ENCODE measurements at regions of chr2 and their contacts with region 1.

Region 1: GRCh38 chr2:170973492-170974303 is 44.6 kb downstream of the GORASP2 start:
- DNase-seq: peak; percentile 99
- H3K4me3 ChIP-seq: peak overlapping the region; percentile 69 to 72
- H3K27ac ChIP-seq: peak overlapping the region; percentile 47 to 91; a peak in 3 of 4 replicates
- H3K4me1 ChIP-seq: peaks cover 5 to 14% of the 10 kb centered on the region in 2 experiments; a peak in 2 of 4 replicates
- H3K27me3 ChIP-seq: no peaks in the 10 kb centered on the region
- CTCF ChIP-seq: peak; percentile 85
- EP300 ChIP-seq: 0 out of 4 replicates have a peak, but pooled peaks of 1 of the 2 experiments have one; percentile 7
- RAD21 ChIP-seq: peak; percentile 85

Region 2: DNA sequence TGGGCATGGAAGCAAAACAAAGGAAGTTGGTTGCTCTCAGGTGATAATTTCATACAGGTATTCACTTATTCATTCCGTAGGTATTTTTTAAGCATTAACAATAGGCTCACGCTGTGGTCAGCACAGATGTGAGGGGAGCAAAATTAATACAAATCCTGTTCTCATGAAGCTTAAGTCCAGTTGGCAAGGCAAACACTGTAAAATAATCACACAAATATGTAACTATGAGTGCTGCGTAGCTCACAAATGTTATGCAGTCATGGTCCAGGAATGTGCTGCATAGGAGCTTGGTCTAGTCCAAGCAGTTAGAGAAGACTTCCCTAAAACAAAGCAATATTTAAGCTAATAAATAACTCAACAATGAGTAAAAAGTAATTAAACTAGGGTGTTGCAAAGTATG is 234.7 kb before region 1 on chr2:
- CTCF ChIA-PET with region 1: no interaction called
- POLR2A ChIA-PET with region 1: no interaction called
- DNase-seq: no peak
- H3K4me3 ChIP-seq: no peak overlapping the region
- H3K27ac ChIP-seq: peak overlapping the region in 1 of 2 experiments; percentile 46; a peak in 2 of 4 replicates
- H3K4me1 ChIP-seq: no peaks in the 10 kb centered on the region
- H3K27me3 ChIP-seq: peaks cover 6% of the 10 kb centered on the region; the same call in 1 of the 2 replicates
- CTCF ChIP-seq: no peak
- EP300 ChIP-seq: no peak
- RAD21 ChIP-seq: no peak

Region 3: DNA sequence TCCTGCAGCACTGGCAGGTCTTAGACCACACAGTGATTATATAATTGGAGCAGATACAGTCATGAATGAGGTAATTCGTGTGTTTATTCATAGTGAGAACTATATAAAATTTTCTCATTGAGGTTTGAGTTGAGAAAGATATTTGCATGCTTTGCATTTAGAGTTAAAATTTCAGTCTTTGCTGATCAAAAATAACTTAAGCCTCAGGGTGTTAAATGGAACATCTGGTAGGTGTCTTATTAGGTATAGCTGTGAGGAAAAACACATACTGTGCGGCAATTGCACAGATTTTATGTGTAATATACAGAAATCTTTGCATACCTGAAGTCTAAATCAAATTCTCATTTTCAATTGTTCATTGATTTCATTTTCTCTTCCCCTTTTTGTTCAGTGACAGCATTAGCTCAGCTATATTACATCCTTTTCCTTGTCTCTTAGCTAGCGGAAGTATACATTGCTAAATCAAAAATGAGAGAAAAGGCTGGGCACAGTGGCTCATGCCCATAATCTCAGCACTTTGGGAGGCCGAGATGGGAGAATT is 23.4 kb before region 1 on chr2:
- CTCF ChIA-PET with region 1: interaction called, 15 read pairs
- POLR2A ChIA-PET with region 1: no interaction called
- DNase-seq: no peak
- H3K4me3 ChIP-seq: no peak overlapping the region
- H3K27ac ChIP-seq: no peak overlapping the region
- H3K4me1 ChIP-seq: no peaks in the 10 kb centered on the region
- H3K27me3 ChIP-seq: no peaks in the 10 kb centered on the region
- CTCF ChIP-seq: no peak
- EP300 ChIP-seq: no peak
- RAD21 ChIP-seq: no peak

Region 4: DNA sequence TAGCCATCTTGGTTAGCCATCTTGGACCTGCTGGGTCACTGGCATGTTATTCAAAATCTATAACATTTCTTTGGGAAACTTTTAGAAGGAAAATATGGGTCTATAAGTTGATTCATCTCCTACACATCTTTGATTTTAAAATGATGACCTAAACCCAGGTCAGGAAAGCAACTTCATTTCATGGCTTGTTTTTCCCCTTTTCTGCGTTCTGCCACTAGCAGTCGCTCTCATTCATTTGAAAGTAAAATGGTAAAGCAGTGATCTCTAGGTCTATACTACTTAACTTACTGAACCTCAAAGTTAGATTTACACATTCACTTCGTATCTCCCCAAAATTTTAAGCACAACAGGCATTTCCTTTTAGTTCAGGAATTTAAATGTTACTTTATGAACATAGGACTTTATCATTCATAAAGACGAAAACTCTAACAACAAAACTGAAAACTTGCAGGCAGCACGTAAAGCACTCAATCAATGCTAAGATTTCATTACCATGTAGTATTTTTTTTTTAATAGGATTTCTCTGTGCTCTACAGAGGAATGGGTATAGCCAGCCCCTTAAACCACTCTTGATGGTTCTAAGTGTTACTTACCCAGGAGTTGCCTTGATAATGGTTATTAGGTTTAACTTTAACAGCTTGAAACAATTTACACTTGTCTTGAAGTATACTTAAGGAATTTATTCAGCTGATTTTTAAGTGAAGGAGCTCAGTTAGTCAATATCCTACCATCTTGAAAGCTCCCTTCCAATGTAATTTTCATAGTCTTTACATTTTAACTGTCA is 17.9 kb after region 1 on chr2:
- CTCF ChIA-PET with region 1: interaction called, 10 read pairs
- POLR2A ChIA-PET with region 1: no interaction called
- DNase-seq: no peak
- H3K4me3 ChIP-seq: no peak overlapping the region
- H3K27ac ChIP-seq: no peak overlapping the region
- H3K4me1 ChIP-seq: no peaks in the 10 kb centered on the region
- H3K27me3 ChIP-seq: no peaks in the 10 kb centered on the region
- CTCF ChIP-seq: no peak
- EP300 ChIP-seq: no peak
- RAD21 ChIP-seq: no peak; the same call in 1 of the 2 replicates

Region 5: DNA sequence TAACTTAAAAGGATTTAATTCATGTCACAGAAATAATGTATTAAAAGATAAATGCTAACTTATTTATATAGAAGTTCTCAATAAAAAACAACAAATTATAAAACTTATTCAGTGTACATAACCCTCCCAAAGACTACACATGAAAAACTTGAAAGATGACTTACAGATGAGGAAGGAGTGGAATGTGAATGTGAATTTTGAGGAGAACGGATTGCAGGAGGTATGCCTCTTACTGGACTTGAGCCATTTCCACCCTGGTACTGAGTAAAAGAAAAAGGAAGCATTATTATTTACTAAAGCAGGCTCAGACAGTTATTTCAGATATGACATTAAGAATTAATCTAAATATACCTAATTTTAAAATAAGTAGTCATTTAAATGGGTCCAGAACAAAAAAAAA is 82.6 kb after region 1 on chr2:
- CTCF ChIA-PET with region 1: no interaction called
- POLR2A ChIA-PET with region 1: no interaction called
- DNase-seq: no peak
- H3K4me3 ChIP-seq: no peak overlapping the region
- H3K27ac ChIP-seq: peak overlapping the region in 1 of 2 experiments; percentile 11; a peak in 1 of 4 replicates
- H3K4me1 ChIP-seq: no peaks in the 10 kb centered on the region; a peak in 1 of 4 replicates
- H3K27me3 ChIP-seq: no peaks in the 10 kb centered on the region
- CTCF ChIP-seq: no peak
- EP300 ChIP-seq: no peak
- RAD21 ChIP-seq: no peak

Region 6: GRCh38 chr2:171086352-171087290 is 112.9 kb after region 1 on chr2:
- CTCF ChIA-PET with region 1: interaction called, 31 read pairs
- POLR2A ChIA-PET with region 1: no interaction called
- DNase-seq: peak; percentile 46
- H3K4me3 ChIP-seq: no peak overlapping the region
- H3K27ac ChIP-seq: no peak overlapping the region
- H3K4me1 ChIP-seq: peaks cover 0 to 4% of the 10 kb centered on the region in 2 experiments; a peak in 1 of 4 replicates
- H3K27me3 ChIP-seq: no peaks in the 10 kb centered on the region
- CTCF ChIP-seq: peak; percentile 69
- EP300 ChIP-seq: no peak
- RAD21 ChIP-seq: peak; percentile 46

Region 7: GRCh38 chr2:171160119-171160955 is 186.6 kb after region 1 on chr2 and contains the start of gene TLK1:
- CTCF ChIA-PET with region 1: interaction called, 46 read pairs
- POLR2A ChIA-PET with region 1: interaction called, 5 read pairs
- DNase-seq: peak; percentile 81
- H3K4me3 ChIP-seq: peak within 1 kb of the TSS; percentile 90 to 99
- H3K27ac ChIP-seq: peak within 1 kb of the TSS; percentile 90 to 91
- H3K4me1 ChIP-seq: peaks cover 4 to 18% of the 10 kb centered on the region in 2 experiments; a peak in 2 of 4 replicates
- H3K27me3 ChIP-seq: no peaks in the 10 kb centered on the region
- CTCF ChIP-seq: no peak
- EP300 ChIP-seq: no peak; a peak in 1 of 4 replicates
- RAD21 ChIP-seq: no peak
- polyA plus RNA-seq, gene TLK1: 4.4 and 4.8 TPM in 2 replicates

Measured in SK-N-SH (cell line).